Activated CD4-positive, alpha-beta memory T cell treated with anti-CD3 and anti-CD28 coated beads, Interleukin-2, amount 10 ng/mL, durations not matched to agents 7 days and 5 days (primary cell): ENCODE measurements at regions of chr5 and their contacts with region 1.

Region 1: DNA sequence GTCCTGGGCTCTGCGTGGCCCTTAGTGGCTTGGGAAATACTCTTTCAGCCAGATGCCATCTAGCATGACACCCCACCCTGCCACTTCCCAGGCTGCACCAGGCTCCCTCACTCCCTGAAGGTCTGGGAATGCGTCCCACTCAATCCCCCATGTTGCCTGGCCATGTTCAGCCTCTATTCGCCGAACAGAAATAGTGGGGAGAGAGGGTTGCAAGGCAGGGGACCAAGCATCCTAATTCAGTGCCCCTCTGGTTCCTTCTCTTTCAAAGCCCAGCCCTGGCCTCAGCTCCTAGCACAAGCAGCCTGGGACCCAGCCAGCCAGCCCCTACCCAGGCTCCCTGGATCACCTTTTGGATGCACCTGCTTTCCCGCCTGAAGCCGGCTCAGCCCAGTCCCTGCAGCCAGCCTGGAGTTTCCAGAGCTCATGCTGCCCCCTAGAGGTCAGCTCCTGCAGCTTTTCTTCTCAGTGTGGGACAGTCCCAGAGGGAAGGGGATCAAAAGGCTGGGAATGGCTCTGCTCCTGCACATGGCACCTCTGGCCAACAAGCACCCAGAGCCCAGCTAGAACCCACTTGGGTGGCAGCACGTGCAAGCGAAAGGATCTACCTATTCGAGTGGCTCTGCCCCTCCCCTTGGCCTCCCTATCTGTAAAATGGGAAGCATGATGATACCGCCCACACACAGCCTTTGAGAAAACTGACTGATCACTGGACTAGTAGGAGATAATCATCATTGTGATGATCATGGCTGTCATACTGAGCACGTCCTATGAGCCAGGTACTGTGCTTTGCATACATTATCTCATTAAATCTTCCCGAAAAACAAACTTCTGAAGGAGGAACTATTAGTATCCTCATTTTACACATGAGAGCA is 48.7 kb upstream of the C5orf58 start:
- DNase-seq: peak; percentile 53
- H3K4me3 Mint-ChIP-seq: no peak overlapping the region
- H3K27ac Mint-ChIP-seq: no peak overlapping the region
- H3K4me1 Mint-ChIP-seq: no peaks in the 10 kb centered on the region
- H3K27me3 Mint-ChIP-seq: peaks cover 19% of the 10 kb centered on the region

Region 2: DNA sequence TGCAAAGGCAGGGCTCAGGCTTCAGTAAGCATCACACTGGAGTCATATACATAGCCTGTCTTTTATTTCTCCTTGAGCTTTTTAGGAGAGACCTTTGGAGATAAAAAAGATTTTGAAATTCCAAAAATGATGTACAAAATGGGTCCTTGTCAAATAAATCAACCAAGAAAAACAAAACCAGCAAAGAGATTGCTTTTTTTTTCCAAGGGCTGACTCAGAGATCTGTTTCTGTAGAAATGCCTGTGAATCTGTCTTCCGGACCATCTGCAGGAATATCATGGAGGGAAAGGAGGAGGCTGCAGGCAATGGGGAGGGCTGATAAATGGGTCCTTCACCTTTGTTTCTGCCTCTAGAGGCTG is 960.5 kb before region 1 on chr5:
- CTCF ChIA-PET with region 1: no interaction called
- POLR2A ChIA-PET with region 1: no interaction called
- DNase-seq: no peak
- H3K4me3 Mint-ChIP-seq: no peak overlapping the region
- H3K27ac Mint-ChIP-seq: no peak overlapping the region
- H3K4me1 Mint-ChIP-seq: no peaks in the 10 kb centered on the region
- H3K27me3 Mint-ChIP-seq: no peaks in the 10 kb centered on the region

Region 3: GRCh38 chr5:170100066-170100943 is 83.7 kb before region 1 on chr5:
- CTCF ChIA-PET with region 1: interaction called, 32 read pairs
- POLR2A ChIA-PET with region 1: no interaction called
- DNase-seq: peak; percentile 71
- H3K4me3 Mint-ChIP-seq: no peak overlapping the region
- H3K27ac Mint-ChIP-seq: no peak overlapping the region
- H3K4me1 Mint-ChIP-seq: no peaks in the 10 kb centered on the region
- H3K27me3 Mint-ChIP-seq: peaks cover 11% of the 10 kb centered on the region

Region 4: GRCh38 chr5:170173235-170173634 is 10.8 kb before region 1 on chr5:
- CTCF ChIA-PET with region 1: interaction called, 14 read pairs
- POLR2A ChIA-PET with region 1: no interaction called
- DNase-seq: no peak
- H3K4me3 Mint-ChIP-seq: no peak overlapping the region
- H3K27ac Mint-ChIP-seq: no peak overlapping the region
- H3K4me1 Mint-ChIP-seq: no peaks in the 10 kb centered on the region
- H3K27me3 Mint-ChIP-seq: peaks cover 21% of the 10 kb centered on the region

Region 5: GRCh38 chr5:170195961-170196360 is 11.9 kb after region 1 on chr5:
- CTCF ChIA-PET with region 1: interaction called, 24 read pairs
- POLR2A ChIA-PET with region 1: no interaction called
- DNase-seq: no peak
- H3K4me3 Mint-ChIP-seq: no peak overlapping the region
- H3K27ac Mint-ChIP-seq: no peak overlapping the region
- H3K4me1 Mint-ChIP-seq: no peaks in the 10 kb centered on the region
- H3K27me3 Mint-ChIP-seq: peaks cover 9% of the 10 kb centered on the region

Region 6: GRCh38 chr5:170226129-170226615 is 42.1 kb after region 1 on chr5:
- CTCF ChIA-PET with region 1: no interaction called
- POLR2A ChIA-PET with region 1: no interaction called
- DNase-seq: no peak
- H3K4me3 Mint-ChIP-seq: no peak overlapping the region
- H3K27ac Mint-ChIP-seq: no peak overlapping the region
- H3K4me1 Mint-ChIP-seq: peaks cover 3% of the 10 kb centered on the region
- H3K27me3 Mint-ChIP-seq: no peaks in the 10 kb centered on the region